Colonic mucosa (tissue), 4 donors: ENCODE measurements at regions of chr10 and their contacts with region 1.

Region 1: GRCh38 chr10:44857363-44858016 is 53.6 kb upstream of the TMEM72 start:
- DNase-seq: peak; percentile 50
- H3K4me3 ChIP-seq: no peak overlapping the region
- H3K27ac ChIP-seq: no peak overlapping the region
- H3K4me1 ChIP-seq: no peaks in the 10 kb centered on the region
- H3K27me3 ChIP-seq: no peaks in the 10 kb centered on the region
- CTCF ChIP-seq: peak; percentile 99

Region 2: GRCh38 chr10:44300666-44301649 is 556.5 kb before region 1 on chr10:
- intact Hi-C with region 1: loop called (anchors 10 kb)
- DNase-seq: no peak
- H3K4me3 ChIP-seq: no peak overlapping the region
- H3K27ac ChIP-seq: no peak overlapping the region
- H3K4me1 ChIP-seq: no peaks in the 10 kb centered on the region
- H3K27me3 ChIP-seq: no peaks in the 10 kb centered on the region
- CTCF ChIP-seq: no peak

Region 3: GRCh38 chr10:44569193-44570091 is 288.0 kb before region 1 on chr10:
- intact Hi-C with region 1: no loop called
- DNase-seq: no peak
- H3K4me3 ChIP-seq: no peak overlapping the region
- H3K27ac ChIP-seq: no peak overlapping the region
- H3K4me1 ChIP-seq: no peaks in the 10 kb centered on the region
- H3K27me3 ChIP-seq: no peaks in the 10 kb centered on the region
- CTCF ChIP-seq: no peak

Region 4: GRCh38 chr10:44619975-44620374 is 237.5 kb before region 1 on chr10:
- intact Hi-C with region 1: no loop called
- DNase-seq: no peak
- H3K4me3 ChIP-seq: no peak overlapping the region
- H3K27ac ChIP-seq: no peak overlapping the region
- H3K4me1 ChIP-seq: no peaks in the 10 kb centered on the region
- H3K27me3 ChIP-seq: no peaks in the 10 kb centered on the region
- CTCF ChIP-seq: no peak

Region 5: DNA sequence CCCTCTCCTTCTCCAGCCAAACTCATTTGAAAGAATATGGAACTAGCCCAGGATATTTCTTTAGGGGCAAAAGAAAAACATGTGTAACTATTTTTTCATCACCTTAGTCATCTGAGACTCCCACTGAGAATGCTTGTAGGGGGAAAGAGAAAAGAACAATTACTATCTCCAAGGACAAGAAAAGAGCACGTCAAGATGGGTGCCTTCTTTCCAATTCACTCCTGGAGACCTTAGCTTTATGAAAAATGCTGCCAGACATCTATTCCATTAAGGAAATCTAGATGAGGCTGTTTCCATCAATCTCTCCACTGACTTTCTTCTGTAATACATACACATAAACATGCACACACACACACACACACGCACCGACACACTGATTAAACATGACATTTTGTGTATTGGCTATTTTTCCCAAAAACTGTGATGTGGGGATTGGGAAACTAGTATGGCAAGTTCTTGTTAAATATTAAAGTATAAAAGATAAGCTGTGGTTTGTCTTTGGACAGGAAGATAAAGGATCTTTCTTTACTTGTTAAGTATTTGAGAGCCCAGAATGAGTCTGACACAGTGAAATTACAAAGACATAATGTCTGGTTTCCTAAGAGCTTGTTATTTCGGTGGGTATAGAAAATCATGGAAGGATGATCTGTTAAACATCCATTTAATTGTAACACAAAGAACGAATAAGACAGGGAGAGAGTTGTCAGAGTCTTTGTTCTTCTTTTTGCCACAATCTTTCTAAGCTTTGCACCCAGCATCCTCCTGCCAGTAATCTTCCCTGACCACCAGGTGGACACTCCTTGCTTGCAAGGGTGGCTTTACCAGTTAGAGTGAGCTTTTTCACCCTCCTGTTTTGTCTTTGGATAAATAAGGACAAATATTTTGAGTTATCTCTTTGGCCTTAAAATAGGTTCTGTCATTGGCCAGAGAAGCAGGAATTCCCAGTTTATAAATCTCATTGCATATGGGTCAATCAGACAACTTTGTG is 123.7 kb before region 1 on chr10:
- intact Hi-C with region 1: loop called (anchors 10 kb)
- DNase-seq: no peak
- H3K4me3 ChIP-seq: no peak overlapping the region
- H3K27ac ChIP-seq: no peak overlapping the region
- H3K4me1 ChIP-seq: no peaks in the 10 kb centered on the region
- H3K27me3 ChIP-seq: no peaks in the 10 kb centered on the region
- CTCF ChIP-seq: no peak